ENCODE measurements at regions of chr5 and their contacts with region 1.

Region 1: GRCh38 chr5:179732417-179732917 is at the start of gene MAML1:
- DNase-seq: peak; percentile 100
- H3K4me3 ChIP-seq: peak within 1 kb of the TSS; percentile 88
- H3K27ac ChIP-seq: peak within 1 kb of the TSS; percentile 83
- H3K27me3 ChIP-seq: no peaks in the 10 kb centered on the region
- CTCF ChIP-seq: no peak
- polyA plus RNA-seq, gene MAML1: 4.9 and 8.8 TPM in 2 replicates

Region 2: DNA sequence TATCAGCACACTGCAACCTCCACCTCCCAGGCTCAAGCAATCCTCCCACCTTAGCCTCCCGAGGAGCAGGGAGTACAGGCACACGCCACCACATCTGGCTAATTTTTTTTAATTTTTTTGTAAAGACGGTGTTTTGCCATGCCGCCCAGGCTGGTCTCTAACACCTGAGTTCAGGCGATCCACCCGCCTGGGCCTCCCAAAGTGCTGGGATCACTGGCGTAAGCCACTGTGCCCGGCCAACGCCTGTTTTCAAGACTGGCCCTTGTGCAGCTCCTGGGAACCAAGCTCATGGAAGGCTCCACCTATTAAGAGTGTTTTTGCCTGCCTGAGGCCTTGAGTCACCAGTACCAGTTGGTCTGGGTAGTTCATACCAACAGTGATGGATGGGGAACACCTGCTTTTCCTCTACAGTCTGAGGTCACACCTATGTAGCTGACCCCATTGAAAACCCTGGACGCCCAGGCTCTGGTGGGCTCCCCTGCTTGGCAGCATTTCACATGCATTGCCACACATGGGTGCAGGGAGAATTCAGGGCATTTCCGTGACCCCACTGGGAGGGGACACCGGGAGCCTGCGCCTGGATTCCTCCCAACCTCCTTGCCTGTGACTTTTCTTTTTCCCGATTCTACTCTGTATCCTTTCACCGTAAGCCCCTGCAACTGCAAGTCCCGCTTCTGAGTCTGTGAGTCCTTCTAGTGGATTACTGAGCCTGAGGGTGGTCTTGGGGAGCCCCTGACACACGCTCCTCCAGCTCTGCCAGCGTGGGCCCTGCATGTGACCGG is 608.8 kb before region 1 on chr5:
- CTCF ChIA-PET with region 1: no interaction called
- POLR2A ChIA-PET with region 1: no interaction called
- DNase-seq: no peak
- H3K4me3 ChIP-seq: no peak overlapping the region
- H3K27ac ChIP-seq: no peak overlapping the region
- H3K27me3 ChIP-seq: no peaks in the 10 kb centered on the region
- CTCF ChIP-seq: no peak

Region 3: GRCh38 chr5:179697993-179698934 is 34.2 kb before region 1 on chr5:
- CTCF ChIA-PET with region 1: interaction called, 3 read pairs
- POLR2A ChIA-PET with region 1: interaction called, 10 read pairs
- DNase-seq: peak; percentile 98
- H3K4me3 ChIP-seq: peak overlapping the region; percentile 78
- H3K27ac ChIP-seq: peak overlapping the region; percentile 97
- H3K27me3 ChIP-seq: no peaks in the 10 kb centered on the region
- CTCF ChIP-seq: no peak

Region 4: DNA sequence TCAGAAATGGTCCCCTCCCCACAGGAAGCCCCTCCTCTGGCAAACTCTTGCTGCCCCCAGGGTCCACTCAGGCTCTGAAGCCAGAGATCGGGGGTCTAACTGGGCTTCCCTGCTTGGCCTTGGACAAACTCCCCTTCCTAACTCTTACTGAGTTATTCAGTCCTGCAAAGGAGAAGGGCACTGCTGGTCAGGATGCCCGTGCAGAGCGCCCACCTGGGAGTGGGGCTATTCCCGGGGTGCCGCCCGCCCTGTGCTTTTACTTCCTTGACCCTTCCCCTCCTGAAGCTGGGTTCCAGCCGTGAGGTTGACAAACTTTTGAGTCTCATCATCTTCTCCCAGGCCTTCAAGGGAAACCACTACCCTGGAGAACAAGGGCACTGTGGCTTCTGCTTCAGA is 170.3 kb after region 1 on chr5:
- CTCF ChIA-PET with region 1: no interaction called
- POLR2A ChIA-PET with region 1: no interaction called
- DNase-seq: no peak
- H3K4me3 ChIP-seq: no peak overlapping the region
- H3K27ac ChIP-seq: no peak overlapping the region
- H3K27me3 ChIP-seq: no peaks in the 10 kb centered on the region
- CTCF ChIP-seq: no peak

Region 5: GRCh38 chr5:180271221-180271620 is 538.8 kb after region 1 on chr5:
- CTCF ChIA-PET with region 1: no interaction called
- POLR2A ChIA-PET with region 1: no interaction called
- DNase-seq: no peak
- H3K4me3 ChIP-seq: no peak overlapping the region
- H3K27ac ChIP-seq: no peak overlapping the region
- H3K27me3 ChIP-seq: no peaks in the 10 kb centered on the region
- CTCF ChIP-seq: no peak